Activated CD8-positive, alpha-beta T cell treated with anti-CD3 and anti-CD28 coated beads for 36 hours (primary cell): ENCODE measurements at regions of chr14 and their contacts with region 1.

Region 1: DNA sequence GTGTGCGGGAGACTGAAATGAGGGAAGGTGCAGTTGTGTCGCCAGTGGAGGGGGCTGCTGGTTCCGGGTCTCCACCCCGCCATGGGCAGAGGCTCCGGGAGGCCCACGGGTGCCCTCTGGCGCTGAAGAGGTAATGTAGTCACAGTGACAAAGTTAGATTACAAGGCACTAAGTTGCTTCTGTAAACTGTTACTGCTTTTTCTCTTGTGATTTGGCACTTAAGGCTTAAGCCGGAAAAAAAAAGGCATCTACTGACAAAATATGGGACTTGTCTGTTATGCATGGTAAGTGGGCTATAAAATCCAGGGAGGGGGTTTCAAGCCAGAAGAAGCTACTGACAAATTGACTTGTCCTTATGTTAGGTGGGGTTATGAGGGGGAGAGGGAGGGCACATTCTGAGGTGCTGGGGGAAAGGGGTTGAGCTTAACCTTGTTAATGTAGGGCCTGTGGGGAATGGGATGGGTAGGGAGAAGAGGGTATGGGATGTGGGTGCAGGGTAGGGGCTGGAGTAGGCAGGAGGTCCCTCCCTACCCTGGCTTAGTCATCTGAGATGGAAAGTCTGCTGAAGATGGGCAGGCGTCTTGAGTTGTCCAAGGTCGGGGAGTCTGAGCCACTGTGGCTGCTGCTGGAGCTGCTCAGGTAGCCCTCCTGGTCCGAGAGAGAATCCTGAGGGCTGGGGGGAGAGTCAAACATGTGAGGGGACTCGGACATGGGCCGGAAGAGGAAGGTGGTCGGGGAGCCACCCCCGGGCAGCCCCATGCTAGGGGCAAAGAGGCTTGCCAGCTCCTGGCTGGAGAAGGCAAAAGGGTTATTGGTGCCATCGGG is 3.7 kb downstream of the ZFP36L1 start:
- DNase-seq: peak; percentile 94
- ATAC-seq: peak; percentile 40
- H3K4me3 Mint-ChIP-seq: peak overlapping the region; percentile 88
- H3K27ac Mint-ChIP-seq: peak overlapping the region; percentile 100
- H3K4me1 Mint-ChIP-seq: peaks cover 53% of the 10 kb centered on the region
- H3K27me3 Mint-ChIP-seq: no peaks in the 10 kb centered on the region
- CTCF ChIP-seq: peak; percentile 82

Region 2: DNA sequence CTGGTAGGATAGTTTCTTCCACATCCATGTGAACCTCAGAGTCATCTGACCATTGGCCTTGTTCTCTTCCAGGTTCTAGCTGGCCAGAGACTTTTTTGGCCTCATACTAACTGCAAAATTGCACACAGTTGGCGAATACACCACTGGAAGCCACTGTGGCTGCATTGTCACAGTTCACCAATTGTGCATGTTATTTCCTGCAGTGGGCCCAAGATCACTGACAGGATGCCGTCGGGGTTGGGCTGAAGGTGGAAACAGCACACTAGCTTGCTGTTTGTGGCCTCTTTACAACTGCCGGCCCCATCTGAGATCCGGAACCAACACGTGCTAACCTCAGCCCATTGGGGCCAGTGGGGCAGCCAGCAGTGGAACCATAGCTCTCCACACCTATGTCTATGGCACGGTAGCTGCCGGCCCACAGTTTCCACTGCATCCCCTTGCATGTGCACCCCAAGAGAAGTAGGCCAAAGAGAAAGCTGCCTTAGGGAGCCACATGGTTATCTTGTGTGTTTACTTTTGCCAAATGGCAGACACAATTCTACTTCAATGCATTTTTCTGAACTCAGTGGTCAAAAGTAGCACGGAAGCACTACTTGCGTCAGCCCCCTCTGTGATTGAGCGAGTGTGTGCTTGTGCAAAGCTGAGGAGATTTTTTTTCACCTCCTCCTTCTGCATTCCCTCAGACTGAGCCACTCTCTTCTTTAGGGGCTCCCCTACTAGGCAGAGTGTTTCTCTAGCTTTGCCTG is 505.7 kb before region 1 on chr14:
- CTCF ChIA-PET with region 1: interaction called, 7 read pairs
- POLR2A ChIA-PET with region 1: interaction called, 14 read pairs
- intact Hi-C with region 1: loop called (anchors 10 kb)
- DNase-seq: peak; percentile 78
- ATAC-seq: peak; percentile 48
- H3K4me3 Mint-ChIP-seq: peak overlapping the region; percentile 33
- H3K27ac Mint-ChIP-seq: peak overlapping the region; percentile 82
- H3K4me1 Mint-ChIP-seq: peaks cover 82% of the 10 kb centered on the region
- H3K27me3 Mint-ChIP-seq: no peaks in the 10 kb centered on the region
- CTCF ChIP-seq: no peak

Region 3: GRCh38 chr14:68535404-68536017 is 253.7 kb before region 1 on chr14:
- CTCF ChIA-PET with region 1: no interaction called
- POLR2A ChIA-PET with region 1: no interaction called
- intact Hi-C with region 1: no loop called
- DNase-seq: no peak
- ATAC-seq: no peak
- H3K4me3 Mint-ChIP-seq: no peak overlapping the region
- H3K27ac Mint-ChIP-seq: no peak overlapping the region
- H3K4me1 Mint-ChIP-seq: peaks cover 2% of the 10 kb centered on the region
- H3K27me3 Mint-ChIP-seq: no peaks in the 10 kb centered on the region
- CTCF ChIP-seq: no peak

Region 4: DNA sequence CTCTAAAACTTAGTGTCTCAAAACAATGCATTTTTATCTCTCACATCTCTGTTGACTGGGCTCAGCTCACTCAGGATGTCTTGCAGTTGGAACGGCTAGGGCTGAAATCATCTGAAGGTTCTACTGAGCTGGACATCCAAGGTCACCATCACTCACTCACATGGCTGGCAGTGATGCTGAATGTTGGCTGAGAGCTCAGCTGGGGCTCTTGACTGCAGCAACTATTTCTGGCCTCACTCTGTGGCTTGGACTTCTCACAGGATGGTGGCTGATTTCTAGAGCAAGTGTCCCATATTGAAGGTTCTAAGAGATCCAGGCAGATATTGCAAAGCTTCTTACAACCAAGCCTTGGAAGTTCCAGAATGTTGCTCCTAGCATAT is 162.8 kb before region 1 on chr14:
- CTCF ChIA-PET with region 1: interaction called, 10 read pairs
- POLR2A ChIA-PET with region 1: no interaction called
- intact Hi-C with region 1: no loop called
- DNase-seq: no peak
- ATAC-seq: no peak
- H3K4me3 Mint-ChIP-seq: no peak overlapping the region
- H3K27ac Mint-ChIP-seq: no peak overlapping the region
- H3K4me1 Mint-ChIP-seq: peaks cover 22% of the 10 kb centered on the region
- H3K27me3 Mint-ChIP-seq: peaks cover 4% of the 10 kb centered on the region
- CTCF ChIP-seq: no peak

Region 5: DNA sequence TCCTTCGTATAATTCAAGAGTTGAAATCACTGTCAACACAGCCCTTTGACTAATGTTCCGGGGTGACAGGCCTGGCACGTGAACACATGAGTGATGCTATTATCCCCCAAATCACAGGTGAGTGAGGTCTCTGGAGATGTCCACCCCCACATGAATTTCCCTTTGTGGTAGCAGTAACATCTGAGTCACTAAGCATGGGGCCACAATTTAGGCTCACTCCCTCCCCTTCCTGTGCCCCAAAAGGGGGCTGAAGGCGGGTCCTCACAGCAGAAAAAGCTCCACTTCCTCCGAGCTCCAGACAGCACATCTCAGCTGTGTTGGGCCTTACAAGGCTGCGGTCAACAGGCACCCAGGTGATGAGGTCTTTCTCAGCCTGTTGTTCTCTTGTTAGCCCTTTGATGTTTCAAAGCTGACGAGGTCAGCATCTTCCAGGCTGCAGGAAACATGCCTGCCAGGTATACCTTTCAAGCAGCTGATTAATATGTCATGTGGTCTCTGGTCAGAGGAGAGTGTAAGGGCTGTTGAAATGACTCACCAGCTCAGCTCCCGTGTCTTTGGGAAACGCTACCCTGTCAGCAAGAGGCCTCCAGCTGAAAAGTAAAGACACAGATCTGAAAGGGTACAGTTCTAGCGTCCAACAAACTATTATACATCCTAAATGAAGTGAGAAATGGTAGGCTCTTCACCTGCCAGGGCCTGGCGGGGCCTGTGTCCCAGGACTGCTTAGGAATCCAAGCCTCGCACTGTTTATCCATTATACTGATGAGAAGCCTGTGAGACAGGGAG is 103.6 kb before region 1 on chr14:
- CTCF ChIA-PET with region 1: interaction called, 38 read pairs
- POLR2A ChIA-PET with region 1: interaction called, 6 read pairs
- intact Hi-C with region 1: loop called (anchors 5 kb)
- DNase-seq: peak; percentile 92
- ATAC-seq: peak; percentile 90
- H3K4me3 Mint-ChIP-seq: peak overlapping the region; percentile 42
- H3K27ac Mint-ChIP-seq: peak overlapping the region; percentile 87
- H3K4me1 Mint-ChIP-seq: peaks cover 56% of the 10 kb centered on the region
- H3K27me3 Mint-ChIP-seq: no peaks in the 10 kb centered on the region
- CTCF ChIP-seq: no peak

Region 6: DNA sequence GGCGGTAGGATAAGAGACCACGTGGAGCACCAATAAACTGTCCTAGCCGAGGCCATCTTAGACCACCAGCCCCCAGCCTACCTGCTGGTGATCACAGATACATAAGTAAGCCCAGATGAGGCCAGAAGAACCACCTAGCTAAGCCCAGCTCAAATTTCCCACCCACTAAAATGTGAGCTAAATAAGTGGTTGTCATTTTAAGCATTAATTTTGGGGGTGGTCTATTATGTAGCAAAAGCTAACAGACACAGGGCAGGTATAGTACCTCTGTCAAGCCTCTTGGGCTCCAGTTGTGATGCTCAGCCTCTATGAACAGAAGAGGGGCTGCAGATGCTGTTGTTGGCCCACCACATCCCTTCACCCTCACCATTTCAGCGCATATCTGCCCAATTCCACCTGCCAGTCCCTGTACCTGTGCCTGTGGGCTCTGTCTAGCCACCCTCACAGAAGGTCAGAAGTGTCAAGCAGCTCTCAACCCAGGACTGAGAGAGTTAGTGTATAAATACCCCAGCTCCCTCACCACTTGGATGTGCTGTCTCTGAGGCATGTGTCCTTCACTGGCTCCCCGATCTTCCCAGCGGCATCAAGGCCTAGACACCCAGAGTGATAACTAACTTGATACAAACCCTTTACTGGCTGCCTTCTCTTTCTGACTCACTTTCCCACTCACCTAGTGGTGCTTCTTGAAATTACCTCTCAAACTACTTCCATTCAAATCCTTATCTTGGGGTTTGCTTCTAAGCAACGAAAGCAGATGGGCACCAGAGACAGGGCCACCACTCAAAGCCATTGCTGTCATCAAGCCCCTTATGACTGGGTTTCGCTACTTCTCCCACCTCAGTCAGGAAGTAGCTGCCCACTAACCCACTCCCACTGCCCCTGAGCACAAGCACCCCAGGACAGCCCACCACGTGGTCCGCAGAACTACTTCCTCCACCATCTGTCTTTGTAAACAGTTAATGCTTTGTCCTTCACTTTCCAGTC is 13.8 kb before region 1 on chr14:
- CTCF ChIA-PET with region 1: interaction called, 58 read pairs
- POLR2A ChIA-PET with region 1: interaction called, 161 read pairs
- intact Hi-C with region 1: no loop called
- DNase-seq: no peak
- ATAC-seq: no peak
- H3K4me3 Mint-ChIP-seq: no peak overlapping the region
- H3K27ac Mint-ChIP-seq: no peak overlapping the region
- H3K4me1 Mint-ChIP-seq: peaks cover 64% of the 10 kb centered on the region
- H3K27me3 Mint-ChIP-seq: no peaks in the 10 kb centered on the region
- CTCF ChIP-seq: peak; percentile 52

Region 7: GRCh38 chr14:68874746-68875155 is 85.5 kb after region 1 on chr14:
- CTCF ChIA-PET with region 1: no interaction called
- POLR2A ChIA-PET with region 1: no interaction called
- intact Hi-C with region 1: no loop called
- DNase-seq: no peak
- ATAC-seq: no peak
- H3K4me3 Mint-ChIP-seq: no peak overlapping the region
- H3K27ac Mint-ChIP-seq: no peak overlapping the region
- H3K4me1 Mint-ChIP-seq: no peaks in the 10 kb centered on the region
- H3K27me3 Mint-ChIP-seq: no peaks in the 10 kb centered on the region
- CTCF ChIP-seq: no peak

Region 8: GRCh38 chr14:68926236-68926635 is 137.0 kb after region 1 on chr14:
- CTCF ChIA-PET with region 1: no interaction called
- POLR2A ChIA-PET with region 1: no interaction called
- intact Hi-C with region 1: no loop called
- DNase-seq: peak; percentile 61
- ATAC-seq: no peak
- H3K4me3 Mint-ChIP-seq: no peak overlapping the region
- H3K27ac Mint-ChIP-seq: peak overlapping the region; percentile 50
- H3K4me1 Mint-ChIP-seq: peaks cover 76% of the 10 kb centered on the region
- H3K27me3 Mint-ChIP-seq: no peaks in the 10 kb centered on the region
- CTCF ChIP-seq: peak; percentile 60